CD4-positive, alpha-beta memory T cell (primary cell): ENCODE measurements at regions of chr7 and their contacts with region 1.

Region 1: GRCh38 chr7:77759294-77759889 is 38.8 kb downstream of the TMEM60 start:
- DNase-seq: peak; percentile 68 to 79 (median 73)
- H3K4me3 ChIP-seq: no peak overlapping the region
- H3K4me3 Mint-ChIP-seq: peak overlapping the region in 1 of 8 donors; percentile 28
- H3K27ac ChIP-seq: no peak overlapping the region
- H3K27ac Mint-ChIP-seq: peak overlapping the region in 6 of 7 donors; percentile 9 to 61 (median 36)
- H3K4me1 ChIP-seq: peaks cover 33% of the 10 kb centered on the region
- H3K4me1 Mint-ChIP-seq: peaks cover 29 to 51% (median 36%) of the 10 kb centered on the region in 4 donors
- H3K27me3 ChIP-seq: no peaks in the 10 kb centered on the region
- H3K27me3 Mint-ChIP-seq: no peaks in the 10 kb centered on the region

Region 2: GRCh38 chr7:77933394-77933793 is 174.0 kb after region 1 on chr7:
- CTCF ChIA-PET with region 1: interaction called, 13 read pairs
- POLR2A ChIA-PET with region 1: no interaction called
- intact Hi-C with region 1: loop called (anchors 2 kb)
- DNase-seq: no peak
- H3K4me3 ChIP-seq: no peak overlapping the region
- H3K4me3 Mint-ChIP-seq: no peak overlapping the region
- H3K27ac ChIP-seq: no peak overlapping the region
- H3K27ac Mint-ChIP-seq: peak overlapping the region in 4 of 7 donors; percentile 16 to 43 (median 38)
- H3K4me1 ChIP-seq: peaks cover 6% of the 10 kb centered on the region
- H3K4me1 Mint-ChIP-seq: peaks cover 13 to 26% (median 20%) of the 10 kb centered on the region in 4 donors
- H3K27me3 ChIP-seq: no peaks in the 10 kb centered on the region
- H3K27me3 Mint-ChIP-seq: no peaks in the 10 kb centered on the region

Region 3: GRCh38 chr7:77940647-77941046 is 181.3 kb after region 1 on chr7:
- CTCF ChIA-PET with region 1: interaction called, 4 read pairs
- POLR2A ChIA-PET with region 1: no interaction called
- intact Hi-C with region 1: loop called (anchors 2 kb)
- DNase-seq: no peak
- H3K4me3 ChIP-seq: no peak overlapping the region
- H3K4me3 Mint-ChIP-seq: no peak overlapping the region
- H3K27ac ChIP-seq: no peak overlapping the region
- H3K27ac Mint-ChIP-seq: no peak overlapping the region
- H3K4me1 ChIP-seq: peaks cover 2% of the 10 kb centered on the region
- H3K4me1 Mint-ChIP-seq: peaks cover 7 to 20% (median 11%) of the 10 kb centered on the region in 4 donors
- H3K27me3 ChIP-seq: no peaks in the 10 kb centered on the region
- H3K27me3 Mint-ChIP-seq: no peaks in the 10 kb centered on the region